PC-9 (cell line): ENCODE measurements at regions of chr13 and their contacts with region 1.

Region 1: DNA sequence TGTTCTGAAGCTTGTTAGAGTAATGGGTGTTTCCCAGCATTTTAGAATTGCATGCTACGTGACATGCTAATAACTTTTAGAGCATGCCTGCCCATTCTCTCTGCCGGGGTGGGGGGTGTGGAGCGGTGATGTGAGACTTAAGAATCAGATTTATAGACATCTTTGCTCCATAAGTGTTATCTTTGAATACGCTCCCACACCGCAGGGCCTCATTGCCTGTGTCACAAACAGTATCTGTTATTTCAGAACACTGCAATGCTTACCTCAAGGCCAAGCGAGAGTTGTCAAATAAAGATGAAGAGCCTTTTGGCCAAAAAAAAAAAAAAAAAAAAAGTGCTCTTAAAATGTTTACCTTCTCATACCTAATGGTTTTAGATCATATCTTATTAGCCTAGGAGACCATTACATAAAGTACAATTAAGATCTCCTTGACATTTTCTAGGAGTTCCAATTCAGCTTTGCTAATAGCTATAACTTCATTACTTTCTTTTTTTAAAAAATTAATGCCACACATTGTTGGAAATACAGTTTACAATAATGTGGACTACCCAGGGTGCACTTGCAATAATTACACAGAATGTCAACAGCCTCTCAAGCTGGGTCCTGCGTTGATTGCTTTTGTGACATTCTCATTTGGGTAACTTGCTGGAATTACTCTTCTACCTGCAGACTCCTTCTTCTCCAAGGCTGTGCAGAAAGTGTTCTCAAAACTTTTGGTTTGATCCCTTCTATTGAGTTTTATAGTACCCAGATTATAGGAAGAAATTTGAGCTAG is 525.3 kb downstream of the KLF12 start:
- DNase-seq: no peak
- H3K4me3 ChIP-seq: no peak overlapping the region
- H3K27ac ChIP-seq: no peak overlapping the region
- H3K4me1 ChIP-seq: peaks cover 6% of the 10 kb centered on the region; the same call in 1 of the 2 replicates
- H3K27me3 ChIP-seq: no peaks in the 10 kb centered on the region
- CTCF ChIP-seq: no peak

Region 2: GRCh38 chr13:73351730-73352129 is 257.2 kb before region 1 on chr13:
- CTCF ChIA-PET with region 1: interaction called, 13 read pairs
- POLR2A ChIA-PET with region 1: no interaction called
- intact Hi-C with region 1: no loop called
- DNase-seq: no peak
- H3K4me3 ChIP-seq: no peak overlapping the region
- H3K27ac ChIP-seq: no peak overlapping the region
- H3K4me1 ChIP-seq: no peaks in the 10 kb centered on the region
- H3K27me3 ChIP-seq: no peaks in the 10 kb centered on the region
- CTCF ChIP-seq: no peak

Region 3: DNA sequence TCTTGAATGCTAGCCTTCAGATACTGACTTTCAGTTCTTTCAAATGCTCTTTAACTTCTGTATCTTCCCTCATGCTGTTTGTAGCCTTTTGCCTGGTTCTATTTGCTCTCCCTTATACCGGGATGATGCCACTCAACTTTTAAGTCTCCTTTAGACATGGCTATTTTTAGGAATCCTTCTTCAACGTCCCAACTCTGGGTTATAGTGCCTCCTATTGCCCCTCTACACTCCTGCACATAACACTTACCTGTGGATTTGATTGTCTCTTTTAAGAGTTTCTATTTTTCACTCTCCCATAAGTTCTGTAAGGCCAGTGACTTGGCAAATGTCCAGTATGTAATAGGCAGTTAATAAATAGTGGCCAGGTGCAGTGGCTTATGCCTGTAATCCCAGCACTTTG is 207.1 kb before region 1 on chr13:
- CTCF ChIA-PET with region 1: no interaction called
- POLR2A ChIA-PET with region 1: no interaction called
- intact Hi-C with region 1: no loop called
- DNase-seq: no peak
- H3K4me3 ChIP-seq: no peak overlapping the region
- H3K27ac ChIP-seq: no peak overlapping the region
- H3K4me1 ChIP-seq: peaks cover 34% of the 10 kb centered on the region
- H3K27me3 ChIP-seq: no peaks in the 10 kb centered on the region
- CTCF ChIP-seq: no peak

Region 4: GRCh38 chr13:73633817-73634460 is 25.0 kb after region 1 on chr13:
- CTCF ChIA-PET with region 1: no interaction called
- POLR2A ChIA-PET with region 1: no interaction called
- intact Hi-C with region 1: no loop called
- DNase-seq: no peak
- H3K4me3 ChIP-seq: no peak overlapping the region
- H3K27ac ChIP-seq: no peak overlapping the region
- H3K4me1 ChIP-seq: no peaks in the 10 kb centered on the region
- H3K27me3 ChIP-seq: no peaks in the 10 kb centered on the region
- CTCF ChIP-seq: no peak